Left cardiac atrium (tissue), 4 donors: ENCODE measurements at regions of chr7 and their contacts with region 1.

Region 1: GRCh38 chr7:39623018-39623731 is at the start of gene RALA:
- DNase-seq: peak; percentile 92
- ATAC-seq: peak; percentile 98 to 99
- total RNA-seq, gene RALA: 21.6 to 22.6 TPM

Region 2: GRCh38 chr7:39683216-39683845 is 60.2 kb after region 1 on chr7:
- intact Hi-C with region 1: loop called in 1 of 2 experiments (anchors 5 kb)
- DNase-seq: no peak
- ATAC-seq: peak in 1 of 2 donors; percentile 47

Region 3: GRCh38 chr7:39732837-39733804 is 109.9 kb after region 1 on chr7:
- intact Hi-C with region 1: loop called in 1 of 2 experiments (anchors 5 kb)
- DNase-seq: peak; percentile 98
- ATAC-seq: peak; percentile 98